GM12878 (cell line): ENCODE measurements at regions of chr19 and their contacts with region 1.

Region 1: GRCh38 chr19:9140159-9140874 is at the start of gene ZNF317:
- DNase-seq: peak; percentile 66
- ATAC-seq: peak; percentile 98
- H3K4me3 ChIP-seq: peak within 1 kb of the TSS; percentile 97
- H3K27ac ChIP-seq: peak within 1 kb of the TSS; percentile 94
- H3K4me1 ChIP-seq: no peaks in the 10 kb centered on the region
- H3K27me3 ChIP-seq: no peaks in the 10 kb centered on the region
- CTCF ChIP-seq: no peak
- EP300 ChIP-seq: no peak
- POLR2A ChIP-seq: peak; percentile 96
- RAD21 ChIP-seq: no peak
- polyA plus RNA-seq, gene ZNF317: 25.0 to 37.5 TPM

Region 2: GRCh38 chr19:9165256-9165655 is 24.9 kb after region 1 on chr19:
- CTCF ChIA-PET with region 1: no interaction called
- POLR2A ChIA-PET with region 1: no interaction called
- RAD21 ChIA-PET with region 1: no interaction called
- SMC1A ChIA-PET with region 1: no interaction called
- in situ Hi-C with region 1: no loop called
- intact Hi-C with region 1: no loop called
- DNase-seq: no peak
- ATAC-seq: no peak
- H3K4me3 ChIP-seq: no peak overlapping the region
- H3K27ac ChIP-seq: no peak overlapping the region
- H3K4me1 ChIP-seq: no peaks in the 10 kb centered on the region
- H3K27me3 ChIP-seq: no peaks in the 10 kb centered on the region
- CTCF ChIP-seq: no peak
- EP300 ChIP-seq: no peak
- POLR2A ChIP-seq: no peak
- RAD21 ChIP-seq: no peak

Region 3: GRCh38 chr19:9309139-9309973 is 169.0 kb after region 1 on chr19 and contains the start of gene ZNF699:
- CTCF ChIA-PET with region 1: no interaction called
- POLR2A ChIA-PET with region 1: no interaction called
- RAD21 ChIA-PET with region 1: no interaction called
- SMC1A ChIA-PET with region 1: no interaction called
- in situ Hi-C with region 1: no loop called
- intact Hi-C with region 1: loop called (anchors 10 kb)
- DNase-seq: peak; percentile 91
- ATAC-seq: peak; percentile 96
- H3K4me3 ChIP-seq: peak within 1 kb of the TSS; percentile 77
- H3K27ac ChIP-seq: peak within 1 kb of the TSS; percentile 88
- H3K4me1 ChIP-seq: no peaks in the 10 kb centered on the region
- H3K27me3 ChIP-seq: no peaks in the 10 kb centered on the region
- CTCF ChIP-seq: no peak
- EP300 ChIP-seq: no peak
- POLR2A ChIP-seq: peak; percentile 87
- RAD21 ChIP-seq: no peak
- polyA plus RNA-seq, gene ZNF699: 0.04 to 0.31 TPM

Region 4: DNA sequence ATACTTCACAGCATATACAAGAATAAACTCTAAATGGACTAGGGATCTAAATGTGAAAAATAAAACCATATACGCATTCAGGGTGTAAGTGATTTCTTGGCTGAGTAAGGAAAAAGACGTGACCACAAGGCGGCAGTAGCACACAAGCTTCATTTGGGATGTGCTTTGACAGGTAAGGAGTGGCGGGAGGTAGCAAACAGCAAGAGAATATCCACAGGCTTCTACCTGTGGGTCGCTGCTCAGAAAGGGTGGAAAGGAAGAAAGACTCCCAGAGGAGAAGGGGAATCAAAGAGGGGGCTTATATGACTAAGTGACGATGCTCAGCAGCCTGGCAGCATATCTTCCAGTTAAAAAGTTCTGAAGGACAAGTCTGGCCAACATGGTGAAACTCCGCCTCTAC is 446.4 kb after region 1 on chr19:
- CTCF ChIA-PET with region 1: no interaction called
- POLR2A ChIA-PET with region 1: no interaction called
- RAD21 ChIA-PET with region 1: no interaction called
- SMC1A ChIA-PET with region 1: no interaction called
- in situ Hi-C with region 1: no loop called
- intact Hi-C with region 1: loop called (anchors 2 kb)
- DNase-seq: peak; percentile 24
- ATAC-seq: peak; percentile 34; the same call in 2 of the 3 replicates
- H3K4me3 ChIP-seq: no peak overlapping the region
- H3K27ac ChIP-seq: no peak overlapping the region
- H3K4me1 ChIP-seq: no peaks in the 10 kb centered on the region
- H3K27me3 ChIP-seq: no peaks in the 10 kb centered on the region
- CTCF ChIP-seq: peak; percentile 61 to 70 (median 66)
- EP300 ChIP-seq: no peak
- POLR2A ChIP-seq: no peak
- RAD21 ChIP-seq: peak; percentile 81

Region 5: GRCh38 chr19:9621156-9622037 is 481.1 kb after region 1 on chr19 and contains the start of gene ZNF561:
- CTCF ChIA-PET with region 1: no interaction called
- POLR2A ChIA-PET with region 1: no interaction called
- RAD21 ChIA-PET with region 1: no interaction called
- SMC1A ChIA-PET with region 1: interaction called, 3 read pairs
- in situ Hi-C with region 1: loop called (anchors 10 kb)
- intact Hi-C with region 1: loop called (anchors 1 kb)
- DNase-seq: peak; percentile 61
- ATAC-seq: peak; percentile 94
- H3K4me3 ChIP-seq: peak within 1 kb of the TSS; percentile 87
- H3K27ac ChIP-seq: peak within 1 kb of the TSS; percentile 99
- H3K4me1 ChIP-seq: peaks cover 3% of the 10 kb centered on the region; the same call in 1 of the 2 replicates
- H3K27me3 ChIP-seq: no peaks in the 10 kb centered on the region
- CTCF ChIP-seq: no peak
- EP300 ChIP-seq: 0 out of 4 replicates have a peak, but pooled peaks of 1 of the 2 experiments have one; percentile 8
- POLR2A ChIP-seq: peak; percentile 93
- RAD21 ChIP-seq: no peak
- polyA plus RNA-seq, gene ZNF561: 12.8 to 18.8 TPM

Region 6: DNA sequence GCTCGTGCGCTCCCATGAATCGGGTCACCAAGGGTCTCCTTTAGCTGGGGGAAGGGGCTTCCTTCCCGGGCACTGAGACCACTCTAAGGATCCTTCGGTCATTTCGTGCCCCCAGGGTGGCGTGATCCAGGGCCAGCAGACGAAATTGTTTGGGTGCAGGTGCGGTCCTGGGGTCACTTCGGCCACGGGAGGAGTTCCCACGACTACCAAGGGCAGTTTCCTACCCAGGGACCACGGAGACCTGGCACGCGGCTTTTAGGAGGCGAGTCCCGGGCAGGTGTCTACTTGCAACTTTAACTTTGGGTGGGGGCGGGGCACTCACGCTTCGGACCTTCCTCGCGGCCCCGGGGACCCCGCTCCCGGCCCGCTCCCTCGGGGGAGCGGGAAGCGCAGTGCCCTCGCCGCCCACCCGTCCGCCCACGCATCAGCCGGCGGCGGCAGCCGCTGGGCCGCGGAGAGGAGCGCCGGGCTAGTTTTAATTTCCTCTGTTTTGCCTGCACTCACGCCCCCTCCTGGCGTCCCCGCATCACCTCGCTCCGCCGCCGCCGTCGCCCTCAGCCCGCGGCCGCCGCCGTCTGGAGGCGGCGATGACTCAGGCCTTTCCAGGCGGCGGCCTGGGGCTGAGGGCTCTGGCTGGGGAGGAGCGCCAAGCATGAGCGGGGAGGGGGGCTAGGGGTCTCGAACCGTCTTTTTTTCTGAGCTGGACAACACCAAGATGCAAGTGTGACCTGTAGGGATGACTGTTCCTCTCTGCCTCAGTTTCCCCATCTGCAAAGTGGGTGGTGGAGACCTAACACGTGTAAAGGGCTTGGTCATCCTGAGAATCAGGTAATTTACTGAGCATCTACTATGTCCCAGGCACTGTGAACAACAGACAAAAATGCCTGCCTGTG is 774.2 kb after region 1 on chr19:
- CTCF ChIA-PET with region 1: no interaction called
- POLR2A ChIA-PET with region 1: no interaction called
- RAD21 ChIA-PET with region 1: no interaction called
- SMC1A ChIA-PET with region 1: no interaction called
- in situ Hi-C with region 1: loop called (anchors 10 kb)
- intact Hi-C with region 1: no loop called
- DNase-seq: no peak
- ATAC-seq: peak; percentile 79
- H3K4me3 ChIP-seq: peak overlapping the region; percentile 52; the same call in 1 of the 2 replicates
- H3K27ac ChIP-seq: no peak overlapping the region
- H3K4me1 ChIP-seq: peaks cover 6% of the 10 kb centered on the region
- H3K27me3 ChIP-seq: peaks cover 6 to 9% of the 10 kb centered on the region in 2 experiments
- CTCF ChIP-seq: peak; percentile 39 to 43 (median 39); a peak in 4 of 6 replicates
- EP300 ChIP-seq: no peak
- POLR2A ChIP-seq: no peak
- RAD21 ChIP-seq: peak; percentile 42

Region 7: DNA sequence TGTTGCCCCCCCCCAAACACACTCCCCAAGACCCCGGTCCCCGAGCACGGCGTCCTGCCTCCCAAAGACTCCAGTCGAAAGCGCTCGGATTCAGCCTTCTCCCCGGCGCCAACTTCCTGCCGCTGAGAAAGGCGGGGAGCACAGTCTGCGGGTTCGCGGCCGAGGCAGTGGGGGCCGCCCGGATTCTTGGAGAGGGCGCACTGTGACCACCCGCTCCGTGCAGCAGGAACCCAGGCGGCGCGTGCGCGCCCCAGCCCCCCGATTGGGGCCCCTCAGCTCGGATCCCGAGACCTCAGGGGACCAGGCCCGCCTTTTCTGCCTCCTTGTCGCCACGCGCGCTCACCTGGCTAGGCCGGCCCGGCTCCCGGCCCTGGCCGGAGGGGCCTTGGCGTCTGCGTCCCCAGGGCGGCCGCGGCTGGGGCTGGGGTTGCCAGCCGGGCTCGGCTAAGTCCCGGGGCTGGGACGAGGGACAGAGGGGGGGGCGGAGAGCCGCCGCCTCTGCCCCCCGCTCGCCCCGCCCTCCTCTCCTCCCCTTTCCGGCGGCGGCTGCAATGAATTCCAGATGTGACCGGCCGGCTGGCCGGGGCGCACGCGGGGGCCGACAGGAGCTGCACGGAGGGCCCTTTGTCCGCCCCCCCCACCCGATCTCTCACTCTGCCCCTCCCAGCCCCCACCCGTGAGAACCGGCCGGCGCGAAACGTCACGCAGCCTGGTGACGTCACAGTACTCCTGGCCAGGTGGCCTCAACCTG is 1090.7 kb after region 1 on chr19 and contains the start of gene S1PR2:
- CTCF ChIA-PET with region 1: no interaction called
- POLR2A ChIA-PET with region 1: no interaction called
- RAD21 ChIA-PET with region 1: no interaction called
- SMC1A ChIA-PET with region 1: no interaction called
- in situ Hi-C with region 1: loop called (anchors 25 kb)
- intact Hi-C with region 1: no loop called
- DNase-seq: no peak
- ATAC-seq: peak; percentile 67
- H3K4me3 ChIP-seq: peak within 1 kb of the TSS; percentile 90
- H3K27ac ChIP-seq: peak within 1 kb of the TSS; percentile 97
- H3K4me1 ChIP-seq: peaks cover 44% of the 10 kb centered on the region
- H3K27me3 ChIP-seq: no peaks in the 10 kb centered on the region
- CTCF ChIP-seq: 0 out of 6 replicates have a peak, but pooled peaks of 1 of the 3 experiments have one; percentile 19
- EP300 ChIP-seq: no peak
- POLR2A ChIP-seq: peak; percentile 81
- RAD21 ChIP-seq: no peak
- polyA plus RNA-seq, gene S1PR2: 4.9 to 9.6 TPM